Right lobe of liver (tissue), 6 donors: ENCODE measurements at regions of chr12 and their contacts with region 1.

Region 1: GRCh38 chr12:95623585-95624042 is 72.3 kb upstream of the USP44 start:
- DNase-seq: peak; percentile 69 to 78 (median 73)
- ATAC-seq: peak; percentile 91 to 95 (median 92)
- H3K4me3 ChIP-seq: no peak overlapping the region
- H3K27ac ChIP-seq: peak overlapping the region in 1 of 3 donors; percentile 51
- H3K4me1 ChIP-seq: peaks cover 0 to 21% (median 5%) of the 10 kb centered on the region in 4 donors
- H3K27me3 ChIP-seq: no peaks in the 10 kb centered on the region
- CTCF ChIP-seq: peak; percentile 55 to 76 (median 70)
- POLR2A ChIP-seq: no peak

Region 2: GRCh38 chr12:95790033-95790911 is 166.7 kb after region 1 on chr12 and contains the start of gene NTN4:
- intact Hi-C with region 1: loop called in 1 of 2 experiments (anchors 10 kb)
- DNase-seq: peak; percentile 67 to 79 (median 78)
- ATAC-seq: peak; percentile 56 to 78 (median 74)
- H3K4me3 ChIP-seq: peak within 1 kb of the TSS; percentile 41 to 79 (median 73)
- H3K27ac ChIP-seq: peak within 1 kb of the TSS; percentile 78 to 86 (median 78)
- H3K4me1 ChIP-seq: peaks cover 0 to 9% (median 4%) of the 10 kb centered on the region in 4 donors
- H3K27me3 ChIP-seq: no peaks in the 10 kb centered on the region
- CTCF ChIP-seq: no peak
- POLR2A ChIP-seq: peak; percentile 54
- total RNA-seq, gene NTN4: 14.7 to 28.7 (median 18.9) TPM